ENCODE measurements at regions of chr7 and their contacts with region 1.

Region 1: DNA sequence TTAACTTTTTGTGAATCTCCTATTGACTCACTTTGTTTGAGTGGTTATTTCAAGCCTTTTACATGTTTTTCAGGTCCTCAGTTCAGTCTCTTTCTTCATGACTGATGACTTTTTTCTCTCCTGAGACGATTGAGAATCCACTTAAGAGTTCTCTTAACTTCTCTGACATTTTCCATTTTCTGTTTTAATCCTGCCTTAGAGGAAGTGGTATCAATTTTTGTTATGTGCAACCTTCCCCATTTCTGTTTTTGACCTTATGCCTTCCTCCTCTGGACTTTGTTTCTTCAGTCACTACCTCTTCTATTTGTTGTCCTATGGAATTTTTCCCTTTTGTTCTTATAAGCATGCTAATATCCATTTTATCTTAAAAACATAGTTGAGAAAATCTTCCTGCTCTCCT is 2.4 kb downstream of the PSMC2 start:
- DNase-seq: no peak
- ATAC-seq: no peak
- H3K4me3 ChIP-seq: no peak overlapping the region
- H3K27ac ChIP-seq: no peak overlapping the region
- H3K4me1 ChIP-seq: peaks cover 2% of the 10 kb centered on the region
- H3K27me3 ChIP-seq: no peaks in the 10 kb centered on the region

Region 2: GRCh38 chr7:103307503-103308231 is 42.1 kb before region 1 on chr7:
- intact Hi-C with region 1: loop called in 1 of 4 experiments (anchors 10 kb)
- DNase-seq: no peak
- ATAC-seq: no peak
- H3K4me3 ChIP-seq: no peak overlapping the region
- H3K27ac ChIP-seq: no peak overlapping the region
- H3K4me1 ChIP-seq: no peaks in the 10 kb centered on the region
- H3K27me3 ChIP-seq: no peaks in the 10 kb centered on the region

Region 3: GRCh38 chr7:103373866-103374643 is 24.2 kb after region 1 on chr7:
- intact Hi-C with region 1: no loop called
- DNase-seq: no peak
- ATAC-seq: no peak
- H3K4me3 ChIP-seq: no peak overlapping the region
- H3K27ac ChIP-seq: no peak overlapping the region
- H3K4me1 ChIP-seq: no peaks in the 10 kb centered on the region
- H3K27me3 ChIP-seq: no peaks in the 10 kb centered on the region

Measured in right cardiac atrium (tissue), 5 donors.